Left cardiac atrium (tissue), 4 donors: ENCODE measurements at regions of chr2 and their contacts with region 1.

Region 1: DNA sequence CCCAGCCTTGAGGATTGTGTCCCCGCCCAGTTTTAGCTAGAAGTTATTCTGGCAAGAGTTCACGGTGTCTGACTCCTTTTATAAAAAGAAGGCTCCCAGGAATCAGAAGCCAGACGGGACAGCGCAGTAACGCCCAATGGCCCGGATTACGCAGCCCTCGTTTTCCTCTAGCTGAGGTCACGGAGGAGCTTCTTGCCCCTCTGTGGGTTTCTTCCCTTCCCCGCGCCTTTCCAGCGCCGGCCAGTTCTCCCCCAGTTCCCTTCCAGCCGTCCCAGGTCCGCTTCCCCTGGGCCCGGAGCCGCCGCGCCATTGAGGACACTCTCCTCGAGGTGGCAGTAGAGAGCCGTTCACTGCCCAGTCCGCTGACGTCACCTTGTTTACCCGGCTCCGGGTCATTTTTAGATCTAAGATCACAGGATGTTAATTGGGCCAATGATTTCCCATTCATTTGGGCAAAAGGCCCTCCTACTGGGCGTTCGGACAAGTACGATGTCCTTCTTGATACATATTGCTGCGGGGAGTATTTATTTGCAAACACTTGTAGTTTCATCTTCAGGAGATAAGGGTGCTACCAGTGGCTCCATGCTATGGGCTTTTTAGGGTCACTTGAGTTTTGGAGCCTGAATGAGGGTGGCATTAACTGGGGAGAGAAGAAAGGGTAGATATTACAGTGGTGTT is 81.5 kb upstream of the PPM1B start:
- DNase-seq: peak; percentile 88
- ATAC-seq: peak; percentile 90 to 98

Region 2: DNA sequence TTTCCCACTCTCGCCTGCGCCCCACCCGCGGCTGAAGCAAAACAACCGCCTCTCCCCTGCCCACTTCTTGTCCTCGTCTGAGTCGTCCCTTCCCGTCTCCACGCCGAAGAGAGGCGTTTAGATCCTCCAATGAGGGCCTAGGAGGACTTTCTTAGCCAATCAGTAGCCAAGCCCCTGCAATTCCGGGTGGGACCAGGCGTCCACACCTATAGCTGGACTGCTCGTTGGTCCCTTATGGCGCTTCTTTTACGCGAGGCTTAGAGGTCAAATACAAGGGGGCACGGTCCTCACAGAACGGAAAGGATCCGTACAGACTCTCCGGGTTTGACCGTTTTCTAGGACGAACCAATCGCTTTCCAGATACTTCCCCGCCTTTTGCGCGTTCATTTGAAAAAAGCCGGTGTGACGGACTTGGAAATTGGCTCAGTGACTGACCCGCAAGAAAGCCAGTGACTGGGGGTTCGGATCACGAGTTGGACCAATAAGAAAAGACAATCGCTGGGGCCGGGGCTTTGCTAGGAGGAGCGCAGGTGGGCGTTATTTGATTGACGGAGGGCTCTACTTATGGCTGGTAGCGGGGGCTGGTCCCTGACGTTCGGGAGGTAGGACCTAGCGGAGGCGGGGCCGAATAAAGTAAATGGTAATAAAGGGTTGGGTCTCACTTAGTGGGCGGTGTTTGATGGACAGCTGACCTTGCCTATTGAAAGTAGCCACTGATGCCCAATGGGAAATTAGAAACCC is 80.9 kb after region 1 on chr2:
- intact Hi-C with region 1: loop called in 1 of 2 experiments (anchors 5 kb)
- DNase-seq: peak; percentile 100
- ATAC-seq: peak; percentile 91 to 94

Region 3: GRCh38 chr2:44233450-44234128 is 146.4 kb after region 1 on chr2:
- intact Hi-C with region 1: loop called in 1 of 2 experiments (anchors 10 kb)
- DNase-seq: no peak
- ATAC-seq: no peak

Region 4: GRCh38 chr2:44291281-44292248 is 204.4 kb after region 1 on chr2:
- intact Hi-C with region 1: loop called in 1 of 2 experiments (anchors 10 kb)
- DNase-seq: no peak
- ATAC-seq: peak; percentile 87 to 92

Region 5: DNA sequence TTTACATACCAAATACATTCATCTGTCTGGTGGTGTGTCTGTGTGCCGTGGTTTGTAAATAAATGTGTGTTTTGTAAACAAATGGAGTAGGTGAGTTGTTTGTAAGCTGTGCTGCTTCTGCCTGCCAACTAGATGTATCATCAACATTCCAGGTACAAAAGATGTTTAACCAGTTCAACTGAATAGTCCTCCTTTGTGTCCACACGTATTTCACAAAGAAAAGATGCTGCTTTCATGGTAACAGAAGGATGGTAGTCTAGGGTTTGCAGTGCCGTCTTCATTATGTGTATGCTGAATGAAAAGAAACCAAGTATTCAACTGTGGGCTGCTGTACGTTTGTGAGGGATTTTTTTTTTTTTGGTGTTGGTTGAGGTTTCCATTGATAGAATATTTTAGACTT is 346.7 kb after region 1 on chr2:
- intact Hi-C with region 1: no loop called
- DNase-seq: no peak
- ATAC-seq: no peak